ENCODE measurements at regions of chr16 and their contacts with region 1.

Region 1: DNA sequence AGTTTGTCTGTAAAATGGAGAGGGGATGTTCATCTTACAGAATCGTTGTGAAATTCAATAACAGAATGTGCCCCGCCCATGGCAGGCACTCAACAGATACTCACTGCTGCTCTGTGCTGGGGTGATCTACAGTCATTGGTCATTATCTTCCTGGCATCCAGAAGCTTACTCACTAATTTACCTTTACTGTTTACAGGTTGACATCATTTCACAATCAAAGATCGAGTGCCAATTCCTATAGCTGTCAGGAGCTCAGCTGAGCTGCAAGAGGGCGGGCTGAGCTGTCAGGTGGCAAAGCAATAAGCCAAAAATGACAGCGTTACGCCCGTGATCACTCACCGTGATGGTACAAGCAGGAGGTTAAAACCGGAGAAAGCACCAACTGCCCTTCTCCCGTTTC is 51.2 kb downstream of the LITAF start:
- DNase-seq: no peak
- H3K4me3 ChIP-seq: no peak overlapping the region
- H3K27ac ChIP-seq: no peak overlapping the region
- H3K4me1 ChIP-seq: peaks cover 0 to 5% (median 2%) of the 10 kb centered on the region in 4 donors
- H3K27me3 ChIP-seq: no peaks in the 10 kb centered on the region
- CTCF ChIP-seq: no peak
- EP300 ChIP-seq: no peak
- POLR2A ChIP-seq: no peak

Region 2: GRCh38 chr16:11407047-11407982 is 128.2 kb before region 1 on chr16:
- intact Hi-C with region 1: loop called (anchors 10 kb)
- DNase-seq: peak; percentile 83 to 84
- H3K4me3 ChIP-seq: no peak overlapping the region
- H3K27ac ChIP-seq: no peak overlapping the region
- H3K4me1 ChIP-seq: peaks cover 0 to 3% (median 0%) of the 10 kb centered on the region in 4 donors
- H3K27me3 ChIP-seq: no peaks in the 10 kb centered on the region
- CTCF ChIP-seq: peak in 5 of 7 experiments; percentile 48 to 91 (median 70)
- EP300 ChIP-seq: no peak
- POLR2A ChIP-seq: no peak

Region 3: DNA sequence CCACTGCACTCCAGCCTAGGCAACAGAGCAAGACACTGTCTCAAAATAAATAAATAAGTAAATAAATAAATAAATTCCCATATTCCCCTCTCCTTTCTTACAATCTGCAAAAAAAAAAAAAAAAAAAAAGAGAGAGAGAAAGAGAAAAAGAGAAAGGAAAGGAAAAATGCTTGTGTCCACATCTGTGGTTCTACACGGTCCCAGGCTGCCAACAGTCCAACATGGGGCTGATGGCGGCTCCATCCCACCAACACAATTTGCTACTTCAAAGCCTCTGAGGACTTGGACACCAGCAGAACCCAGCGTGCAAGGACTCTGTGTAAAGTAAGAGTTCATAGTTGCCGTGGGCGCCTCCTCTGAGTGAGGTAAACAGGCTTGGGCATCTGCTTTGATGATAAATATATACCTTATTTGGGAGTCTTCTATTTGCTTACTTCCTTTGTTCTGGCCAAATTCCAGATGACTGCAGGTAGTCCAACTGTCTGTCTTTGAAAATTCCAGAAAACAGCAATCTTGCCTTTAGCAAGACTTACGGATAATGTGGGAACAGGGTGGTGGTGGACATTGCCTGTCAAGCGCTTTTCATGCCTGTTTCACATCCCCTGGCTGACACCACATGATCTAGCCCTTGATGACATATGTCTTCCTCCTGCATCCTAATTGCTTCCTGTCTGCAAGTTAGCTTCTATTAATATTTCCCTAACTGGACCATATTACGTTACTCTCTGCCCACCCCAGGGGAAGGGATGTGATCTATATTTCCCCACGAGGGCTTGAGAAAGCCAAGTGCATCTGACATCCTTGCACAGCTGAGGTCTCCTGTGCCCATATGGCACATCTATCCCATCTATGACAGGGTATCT is 41.2 kb after region 1 on chr16:
- intact Hi-C with region 1: no loop called
- DNase-seq: no peak
- H3K4me3 ChIP-seq: no peak overlapping the region
- H3K27ac ChIP-seq: no peak overlapping the region
- H3K4me1 ChIP-seq: peaks cover 45 to 98% (median 77%) of the 10 kb centered on the region in 4 donors
- H3K27me3 ChIP-seq: no peaks in the 10 kb centered on the region
- CTCF ChIP-seq: no peak
- EP300 ChIP-seq: no peak
- POLR2A ChIP-seq: no peak

Region 4: DNA sequence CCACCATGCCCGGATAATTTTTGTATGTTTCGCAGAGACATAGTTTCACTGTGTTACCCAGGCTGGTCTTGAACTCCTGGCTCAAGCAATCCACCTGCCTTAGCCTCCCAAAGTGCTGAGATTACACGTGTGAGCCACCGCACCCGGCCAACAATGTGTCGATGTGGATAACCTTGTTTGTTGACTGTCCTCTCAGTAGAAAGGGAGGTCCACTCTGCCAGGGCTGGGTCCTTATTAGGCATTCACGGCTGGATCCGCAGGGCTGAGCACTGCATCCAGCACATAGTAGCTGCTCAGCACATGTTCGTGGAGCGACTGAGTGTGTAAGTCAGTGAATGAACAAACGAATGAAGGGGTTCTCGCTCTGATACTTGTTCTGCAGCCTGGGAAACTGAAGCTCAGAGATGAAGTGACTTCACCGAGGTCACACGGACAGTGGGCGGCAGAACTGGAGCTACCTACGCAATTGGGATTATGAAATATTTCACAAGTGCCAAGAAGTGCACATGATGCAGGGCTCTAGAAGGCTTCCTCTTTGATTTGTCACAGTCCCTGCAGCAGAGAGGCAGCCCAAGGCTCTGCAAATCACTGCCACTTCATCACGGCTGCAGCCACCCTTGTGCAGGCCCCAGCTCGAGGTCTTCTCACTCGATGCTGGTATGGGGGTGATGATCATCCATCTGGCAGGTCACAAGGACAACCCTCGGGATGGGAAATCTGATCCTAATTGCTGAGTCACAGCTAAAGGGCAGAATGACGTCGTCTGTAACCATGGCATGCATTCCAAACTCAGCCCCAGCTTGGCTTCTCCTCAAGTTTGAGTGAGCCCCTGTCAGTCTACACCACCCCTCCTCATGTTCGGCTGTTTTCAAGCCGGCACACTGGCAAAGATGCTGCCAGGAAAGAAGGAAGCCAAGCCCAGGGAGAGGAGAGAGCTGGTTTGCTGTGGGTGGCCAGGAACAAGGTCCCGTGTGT is 104.7 kb after region 1 on chr16:
- intact Hi-C with region 1: loop called (anchors 10 kb)
- DNase-seq: peak; percentile 73 to 82
- H3K4me3 ChIP-seq: no peak overlapping the region
- H3K27ac ChIP-seq: peak overlapping the region; percentile 43 to 91 (median 85)
- H3K4me1 ChIP-seq: peaks cover 20 to 46% (median 33%) of the 10 kb centered on the region in 4 donors
- H3K27me3 ChIP-seq: no peaks in the 10 kb centered on the region
- CTCF ChIP-seq: no peak
- EP300 ChIP-seq: peak; percentile 84
- POLR2A ChIP-seq: no peak